ENCODE measurements at regions of chr19 and their contacts with region 1.

Region 1: DNA sequence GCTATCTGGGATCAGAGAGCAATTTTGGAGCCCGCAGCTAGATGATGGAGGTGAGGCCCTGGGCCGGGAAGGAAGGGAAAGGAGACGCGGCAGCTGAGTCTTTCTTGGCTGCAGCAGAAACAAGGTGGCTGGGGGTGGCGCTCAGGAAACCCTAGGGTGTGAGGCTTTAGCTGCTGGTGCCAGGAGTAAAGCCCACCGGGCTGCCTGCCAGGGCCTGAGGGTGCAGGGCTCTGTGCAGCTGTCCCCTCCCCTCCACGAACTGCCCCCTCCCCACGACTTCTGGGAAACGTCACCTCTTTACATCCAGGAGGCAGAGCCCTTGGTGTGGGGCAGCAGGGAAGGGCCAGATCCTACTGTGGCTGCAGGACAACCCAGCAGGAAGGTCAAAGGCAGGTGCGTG is 307.1 kb downstream of the ZNF536 start:
- DNase-seq: no peak
- ATAC-seq: no peak
- H3K4me3 ChIP-seq: no peak overlapping the region
- H3K27ac ChIP-seq: no peak overlapping the region
- H3K4me1 ChIP-seq: peaks cover 13% of the 10 kb centered on the region
- H3K27me3 ChIP-seq: no peaks in the 10 kb centered on the region
- CTCF ChIP-seq: no peak
- POLR2A ChIP-seq: no peak

Region 2: GRCh38 chr19:30817965-30818567 is 138.8 kb after region 1 on chr19:
- intact Hi-C with region 1: no loop called
- DNase-seq: no peak
- ATAC-seq: no peak
- H3K4me3 ChIP-seq: no peak overlapping the region
- H3K27ac ChIP-seq: no peak overlapping the region
- H3K4me1 ChIP-seq: no peaks in the 10 kb centered on the region
- H3K27me3 ChIP-seq: no peaks in the 10 kb centered on the region
- CTCF ChIP-seq: no peak
- POLR2A ChIP-seq: no peak

Region 3: DNA sequence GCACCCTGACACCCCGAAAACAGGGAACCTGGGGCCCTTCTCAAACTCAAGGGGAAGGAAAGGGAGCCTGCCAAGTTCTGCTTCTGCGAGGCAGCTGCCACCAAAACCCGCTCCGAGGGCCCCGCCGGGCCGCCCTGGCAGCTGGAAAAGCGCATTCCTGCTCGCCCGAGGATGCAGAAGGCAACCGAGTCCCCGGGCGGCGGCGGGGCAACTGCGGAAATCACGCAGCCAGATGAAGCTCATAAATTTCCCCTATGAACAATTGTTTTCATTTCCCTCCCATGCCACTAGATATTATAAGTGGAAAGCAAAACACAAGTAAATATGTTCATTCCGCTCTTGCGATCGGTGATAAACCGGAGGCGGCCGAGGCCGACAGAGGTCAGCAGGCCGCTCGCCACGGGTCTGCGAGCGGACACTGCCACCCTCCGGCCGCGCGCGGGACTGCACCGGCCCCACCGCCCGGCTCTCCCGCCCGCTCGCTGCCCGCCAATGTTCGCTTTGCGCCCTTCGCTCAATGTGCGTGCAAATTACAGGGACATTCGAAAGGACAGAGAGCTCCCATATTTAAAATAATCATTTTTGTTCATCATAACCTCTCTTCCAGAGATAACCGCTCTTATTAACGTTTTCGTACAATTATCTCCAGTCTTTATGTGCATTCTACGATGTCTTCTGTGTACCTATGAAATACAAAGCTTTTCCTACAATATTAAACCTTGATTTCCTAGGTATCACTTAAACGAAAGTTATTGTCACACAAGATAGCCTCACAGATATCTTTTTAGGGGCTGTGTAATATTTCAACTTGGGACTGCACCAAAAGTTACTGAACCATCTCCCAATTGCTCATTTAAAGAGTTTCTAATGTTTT is 1545.3 kb after region 1 on chr19:
- intact Hi-C with region 1: loop called (anchors 5 kb)
- DNase-seq: peak; percentile 35 to 70 (median 62)
- ATAC-seq: peak; percentile 77
- H3K4me3 ChIP-seq: no peak overlapping the region
- H3K27ac ChIP-seq: no peak overlapping the region
- H3K4me1 ChIP-seq: peaks cover 8% of the 10 kb centered on the region
- H3K27me3 ChIP-seq: no peaks in the 10 kb centered on the region
- CTCF ChIP-seq: peak; percentile 81 to 100 (median 95)
- POLR2A ChIP-seq: no peak

Measured in body of pancreas (tissue), 4 donors.